Aorta (tissue), 5 donors: ENCODE measurements at regions of chr5 and their contacts with region 1.

Region 1: GRCh38 chr5:175689147-175689991 is 31.5 kb downstream of the HRH2 start:
- DNase-seq: peak; percentile 81 to 89
- ATAC-seq: no peak
- H3K4me3 ChIP-seq: no peak overlapping the region
- H3K27ac ChIP-seq: no peak overlapping the region
- H3K4me1 ChIP-seq: no peaks in the 10 kb centered on the region
- H3K27me3 ChIP-seq: no peaks in the 10 kb centered on the region

Region 2: GRCh38 chr5:175052351-175052750 is 637.0 kb before region 1 on chr5:
- intact Hi-C with region 1: no loop called
- DNase-seq: no peak
- ATAC-seq: no peak
- H3K4me3 ChIP-seq: no peak overlapping the region
- H3K27ac ChIP-seq: no peak overlapping the region
- H3K4me1 ChIP-seq: no peaks in the 10 kb centered on the region
- H3K27me3 ChIP-seq: no peaks in the 10 kb centered on the region

Region 3: DNA sequence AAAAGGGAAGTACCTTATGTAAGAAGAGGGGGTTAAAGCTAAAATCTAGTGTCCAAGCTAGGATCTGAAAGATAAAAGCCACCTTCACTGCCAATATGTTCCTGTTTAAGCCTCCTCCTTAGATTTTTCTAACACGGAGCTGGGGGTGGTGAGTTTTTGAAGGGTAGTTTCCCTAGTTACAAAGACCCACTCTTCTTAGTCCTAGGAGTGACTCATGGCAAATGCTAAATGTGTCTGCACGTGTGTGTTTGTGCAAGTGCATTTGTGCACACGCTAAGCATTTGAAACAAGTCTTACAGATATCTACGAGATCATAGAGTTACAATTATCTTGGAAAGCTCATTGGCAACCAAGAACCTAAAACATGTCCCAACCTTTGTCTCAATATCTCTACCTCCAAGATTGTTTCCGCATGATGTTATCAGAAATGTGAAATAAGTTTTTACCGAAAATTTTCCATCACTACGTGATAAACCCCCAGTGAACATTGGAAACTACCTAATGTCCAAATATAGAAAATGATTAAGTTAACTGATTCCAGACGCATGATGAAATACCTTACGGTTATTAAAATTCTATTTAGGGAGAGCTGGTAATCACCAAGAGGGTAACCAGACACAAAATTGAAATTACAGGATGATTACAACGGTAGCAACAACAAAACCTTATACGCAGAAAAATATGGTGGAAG is 109.5 kb before region 1 on chr5:
- intact Hi-C with region 1: loop called in 1 of 2 experiments (anchors 5 kb)
- DNase-seq: no peak
- ATAC-seq: no peak
- H3K4me3 ChIP-seq: no peak overlapping the region
- H3K27ac ChIP-seq: no peak overlapping the region
- H3K4me1 ChIP-seq: peaks cover 0 to 2% of the 10 kb centered on the region in 2 donors
- H3K27me3 ChIP-seq: no peaks in the 10 kb centered on the region

Region 4: DNA sequence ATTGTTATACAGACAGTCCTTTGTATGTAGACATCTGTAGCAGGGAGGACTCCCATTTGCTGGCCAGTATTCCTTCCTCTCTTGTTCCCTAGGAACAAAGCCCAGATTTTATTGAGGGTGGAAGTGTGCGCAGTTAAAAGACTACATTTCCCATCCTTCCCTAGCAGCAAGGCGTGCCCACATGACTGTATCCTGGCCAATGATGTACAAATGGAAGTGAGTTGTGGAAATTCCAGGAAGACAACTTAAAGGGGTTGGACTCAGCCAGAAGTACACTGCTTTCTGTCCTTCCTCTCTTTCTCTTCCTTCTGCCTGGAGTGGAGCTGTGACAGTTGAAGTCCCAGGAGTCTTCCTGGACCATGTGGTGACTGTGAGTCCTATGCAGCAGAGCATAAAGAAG is 57.5 kb after region 1 on chr5:
- intact Hi-C with region 1: no loop called
- DNase-seq: peak in 1 of 2 donors; percentile 17
- ATAC-seq: no peak
- H3K4me3 ChIP-seq: no peak overlapping the region
- H3K27ac ChIP-seq: no peak overlapping the region
- H3K4me1 ChIP-seq: no peaks in the 10 kb centered on the region
- H3K27me3 ChIP-seq: no peaks in the 10 kb centered on the region